Gastrocnemius medialis (tissue), 4 donors: ENCODE measurements at regions of chr6 and their contacts with region 1.

Region 1: DNA sequence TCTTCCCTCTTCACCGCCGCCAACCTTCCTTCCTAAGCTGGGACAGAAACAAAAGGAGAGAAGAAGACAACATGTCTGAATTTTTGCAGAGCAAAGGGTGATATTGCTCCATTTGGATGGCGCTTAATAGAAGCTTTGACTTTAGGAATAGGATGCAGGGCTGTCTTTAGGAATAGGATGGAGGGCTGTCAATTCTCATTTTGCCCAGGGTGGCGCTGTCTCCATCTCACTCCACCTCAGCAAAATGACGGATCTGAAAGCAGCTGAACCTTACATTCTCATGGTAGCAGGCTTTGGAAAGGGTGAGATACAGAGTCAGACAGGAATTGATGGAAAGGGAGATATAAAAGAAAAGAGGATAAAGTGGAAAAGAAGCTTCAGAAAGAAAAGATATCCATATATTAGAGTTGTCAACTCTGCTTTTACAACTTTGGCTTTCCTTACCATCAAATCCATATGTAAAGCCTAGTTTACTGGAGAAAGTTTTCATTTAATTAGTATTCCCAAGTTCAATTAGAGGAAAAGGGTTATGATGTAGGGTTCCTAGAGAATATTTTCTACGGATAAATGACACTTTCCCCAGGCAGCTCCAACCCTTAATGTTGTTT is 2.4 kb downstream of the MTCL3 start:
- DNase-seq: peak in 1 of 2 donors; percentile 20
- ATAC-seq: peak; percentile 60 to 75
- H3K4me3 ChIP-seq: peak overlapping the region; percentile 66 to 95 (median 74)
- H3K27ac ChIP-seq: no peak overlapping the region
- H3K4me1 ChIP-seq: peaks cover 15% of the 10 kb centered on the region in 2 donors
- H3K27me3 ChIP-seq: peaks cover 33 to 40% (median 39%) of the 10 kb centered on the region in 3 donors
- CTCF ChIP-seq: peak in 4 of 5 experiments; percentile 24 to 68 (median 42)
- POLR2A ChIP-seq: no peak

Region 2: DNA sequence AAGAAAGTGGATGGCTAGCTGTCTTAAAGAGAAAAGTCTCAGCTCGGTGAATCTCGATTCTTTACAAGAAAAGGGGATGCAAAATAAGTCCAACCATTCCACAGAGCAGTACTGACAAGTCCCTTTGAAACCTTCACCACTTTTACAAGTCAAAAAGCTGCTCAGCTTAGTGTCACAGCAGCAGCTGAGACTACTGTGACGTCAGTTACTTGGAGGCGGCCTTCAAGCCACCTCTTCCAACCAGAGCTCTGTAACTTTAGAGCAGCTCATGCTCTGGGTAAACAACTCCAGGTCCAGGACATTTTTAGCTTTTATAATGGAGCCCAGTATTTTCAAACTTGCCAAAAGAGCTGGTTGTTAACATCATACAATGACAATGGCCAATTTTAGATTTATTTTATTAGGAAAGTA is 57.5 kb before region 1 on chr6 and contains the start of gene KIAA0408:
- in situ Hi-C with region 1: no loop called
- intact Hi-C with region 1: loop called (anchors 5 kb)
- DNase-seq: peak; percentile 87 to 88
- ATAC-seq: peak; percentile 92 to 93
- H3K4me3 ChIP-seq: peak within 1 kb of the TSS; percentile 48 to 76 (median 61)
- H3K27ac ChIP-seq: peak within 1 kb of the TSS; percentile 88 to 94 (median 91)
- H3K4me1 ChIP-seq: peaks cover 55 to 74% of the 10 kb centered on the region in 2 donors
- H3K27me3 ChIP-seq: no peaks in the 10 kb centered on the region
- CTCF ChIP-seq: no peak
- POLR2A ChIP-seq: peak; percentile 35 to 93
- total RNA-seq, gene KIAA0408: 34.0 to 57.4 (median 44.8) TPM